Activated CD4-positive, alpha-beta memory T cell treated with anti-CD3 and anti-CD28 coated beads, Interleukin-2, amount 10 ng/mL, durations not matched to agents 7 days and 5 days (primary cell): ENCODE measurements at regions of chr2 and their contacts with region 1.

Region 1: DNA sequence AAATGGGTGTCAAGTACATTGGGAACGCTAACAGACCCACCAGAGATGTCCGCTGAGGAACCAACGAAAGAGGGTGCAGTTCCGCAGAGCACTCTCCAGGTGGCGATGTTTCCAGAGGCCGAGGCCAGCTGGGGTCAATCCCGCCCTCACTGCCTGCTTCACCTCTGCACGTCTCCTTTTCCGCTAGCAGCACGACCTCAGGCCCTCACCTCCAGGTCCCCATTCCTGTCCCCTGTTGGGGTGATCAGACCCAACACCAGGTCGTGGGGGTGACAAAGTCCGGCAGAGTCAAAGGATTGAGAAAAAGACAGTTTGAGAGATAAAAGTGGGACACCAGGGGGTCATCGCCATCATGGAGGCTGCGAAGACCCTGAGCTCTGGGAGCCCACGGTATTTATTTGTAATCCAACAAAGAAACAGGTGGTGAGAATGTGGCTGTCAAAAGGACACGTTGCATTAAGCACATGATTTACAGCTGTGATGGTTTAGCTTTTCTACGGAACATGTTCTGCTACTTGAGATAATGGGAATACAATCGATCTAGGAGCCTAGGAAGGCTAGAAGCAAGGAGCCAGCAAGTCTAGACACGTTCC is 27.3 kb downstream of the ZAP70 start:
- DNase-seq: peak; percentile 46
- H3K4me3 Mint-ChIP-seq: no peak overlapping the region
- H3K27ac Mint-ChIP-seq: peak overlapping the region; percentile 99
- H3K4me1 Mint-ChIP-seq: peaks cover 66% of the 10 kb centered on the region
- H3K27me3 Mint-ChIP-seq: no peaks in the 10 kb centered on the region

Region 2: GRCh38 chr2:97645695-97646629 is 94.7 kb before region 1 on chr2 and contains the start of gene COX5B:
- CTCF ChIA-PET with region 1: interaction called, 4 read pairs
- POLR2A ChIA-PET with region 1: interaction called, 12 read pairs
- DNase-seq: peak; percentile 99
- H3K4me3 Mint-ChIP-seq: peak within 1 kb of the TSS; percentile 91
- H3K27ac Mint-ChIP-seq: peak within 1 kb of the TSS; percentile 92
- H3K4me1 Mint-ChIP-seq: peaks cover 24% of the 10 kb centered on the region
- H3K27me3 Mint-ChIP-seq: peaks cover 3% of the 10 kb centered on the region
- total RNA-seq, gene COX5B: 192 to 203 TPM

Region 3: DNA sequence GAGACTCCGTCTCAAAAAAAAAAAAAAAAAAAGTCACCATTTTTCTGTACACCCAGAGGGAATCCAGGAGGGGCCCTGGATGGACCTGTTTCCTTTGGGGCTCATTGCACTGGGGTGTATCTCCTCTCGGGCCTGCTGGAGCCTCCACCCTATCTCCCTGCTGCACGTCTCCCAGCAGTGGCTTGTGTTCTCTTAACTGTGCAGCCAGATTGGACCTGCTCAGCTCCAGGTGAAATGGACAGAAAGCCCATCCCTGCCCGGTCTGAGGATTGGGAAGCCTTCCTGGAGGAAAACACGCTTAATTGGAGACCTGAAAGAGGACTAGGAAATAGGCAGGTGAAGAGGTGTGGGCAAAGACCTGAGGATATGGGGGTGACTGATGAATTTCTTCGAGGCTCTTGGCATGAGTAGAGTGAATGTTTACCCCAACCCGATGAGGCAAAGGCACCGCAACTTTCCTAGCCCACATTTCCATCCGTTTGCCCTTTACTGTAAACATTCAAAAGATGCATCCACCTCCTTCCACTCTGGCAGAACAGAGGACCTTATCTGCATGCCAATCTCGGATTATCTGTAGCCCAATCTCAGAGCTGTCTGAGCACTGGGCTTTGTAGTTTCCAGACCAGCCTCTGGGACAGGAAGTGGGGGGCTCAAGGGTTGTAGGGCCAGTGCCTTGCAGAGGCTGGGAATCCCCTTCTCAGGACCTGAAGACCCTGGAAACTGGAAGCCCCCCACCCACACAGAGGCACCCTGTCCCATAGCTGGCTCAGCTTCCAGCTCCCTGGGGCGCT is 29.9 kb before region 1 on chr2:
- CTCF ChIA-PET with region 1: interaction called, 96 read pairs
- POLR2A ChIA-PET with region 1: interaction called, 119 read pairs
- DNase-seq: no peak
- H3K4me3 Mint-ChIP-seq: no peak overlapping the region
- H3K27ac Mint-ChIP-seq: no peak overlapping the region
- H3K4me1 Mint-ChIP-seq: peaks cover 49% of the 10 kb centered on the region
- H3K27me3 Mint-ChIP-seq: no peaks in the 10 kb centered on the region

Region 4: DNA sequence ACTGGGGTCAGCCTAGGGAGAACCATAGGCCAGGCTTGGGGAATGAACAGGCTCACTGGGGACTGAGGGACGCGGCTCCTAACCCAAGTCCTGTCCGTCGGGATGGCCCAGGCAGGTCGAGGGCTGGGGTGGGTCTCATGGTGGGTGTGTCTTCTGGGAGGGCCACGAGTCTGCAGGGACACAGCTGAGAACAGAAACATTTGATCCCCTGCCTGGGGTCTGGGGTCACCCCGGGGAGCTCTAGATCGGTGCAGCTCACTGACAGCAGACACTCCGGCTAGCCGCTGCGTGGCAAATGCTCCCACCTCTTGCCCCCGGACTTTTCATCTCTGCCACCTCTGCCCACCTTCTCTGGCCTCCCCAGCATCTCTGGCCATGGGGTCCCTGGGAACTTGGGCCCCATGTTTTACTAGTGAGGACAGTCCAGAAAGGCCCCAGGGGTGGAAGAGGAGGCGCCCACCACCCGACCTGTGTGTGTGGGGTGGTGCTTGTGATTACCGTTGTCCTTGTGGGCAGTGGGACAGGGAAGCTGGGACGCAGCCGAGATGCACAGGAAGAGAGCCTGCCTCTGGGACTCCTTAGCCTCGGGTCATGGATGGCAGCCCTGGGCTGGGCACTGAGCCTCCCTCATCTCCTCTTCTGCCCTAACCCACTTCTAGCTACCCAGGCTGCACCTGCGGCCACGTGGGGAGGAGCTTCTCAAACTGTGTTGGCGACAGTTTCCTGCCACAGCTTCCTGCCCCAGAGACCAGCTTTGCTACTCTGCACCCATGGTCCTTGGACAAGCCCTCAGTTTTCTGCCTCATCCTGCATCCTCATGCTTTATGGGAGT is 22.4 kb before region 1 on chr2:
- CTCF ChIA-PET with region 1: interaction called, 96 read pairs
- POLR2A ChIA-PET with region 1: interaction called, 119 read pairs
- DNase-seq: peak; percentile 89
- H3K4me3 Mint-ChIP-seq: peak overlapping the region; percentile 95
- H3K27ac Mint-ChIP-seq: peak overlapping the region; percentile 98
- H3K4me1 Mint-ChIP-seq: peaks cover 76% of the 10 kb centered on the region
- H3K27me3 Mint-ChIP-seq: no peaks in the 10 kb centered on the region

Region 5: GRCh38 chr2:97728091-97728731 is 12.5 kb before region 1 on chr2:
- CTCF ChIA-PET with region 1: interaction called, 15 read pairs
- POLR2A ChIA-PET with region 1: interaction called, 9 read pairs
- DNase-seq: no peak
- H3K4me3 Mint-ChIP-seq: no peak overlapping the region
- H3K27ac Mint-ChIP-seq: peak overlapping the region; percentile 58
- H3K4me1 Mint-ChIP-seq: peaks cover 54% of the 10 kb centered on the region
- H3K27me3 Mint-ChIP-seq: no peaks in the 10 kb centered on the region

Region 6: DNA sequence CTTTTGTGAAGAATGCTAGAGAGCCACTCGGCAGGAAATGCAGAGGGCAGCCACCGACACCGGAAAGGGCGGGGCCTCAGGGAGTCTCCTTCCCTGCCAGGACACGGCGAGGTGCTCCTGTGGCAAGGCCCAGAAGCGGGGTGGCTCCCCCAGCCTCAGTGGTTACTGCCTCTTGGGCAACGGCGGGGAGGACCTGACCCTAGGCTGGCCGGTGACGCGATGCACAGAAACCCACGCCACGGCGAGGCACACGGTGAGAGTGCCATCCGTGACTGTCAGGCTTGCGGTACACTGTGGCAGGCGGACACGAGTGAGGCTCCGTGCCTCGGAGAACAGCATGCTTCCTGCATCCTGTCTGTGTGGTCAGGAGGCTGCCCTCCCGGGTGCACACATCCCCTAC is 20.5 kb after region 1 on chr2:
- CTCF ChIA-PET with region 1: interaction called, 10 read pairs
- POLR2A ChIA-PET with region 1: interaction called, 6 read pairs
- DNase-seq: peak; percentile 73
- H3K4me3 Mint-ChIP-seq: peak overlapping the region; percentile 8
- H3K27ac Mint-ChIP-seq: peak overlapping the region; percentile 80
- H3K4me1 Mint-ChIP-seq: peaks cover 45% of the 10 kb centered on the region
- H3K27me3 Mint-ChIP-seq: no peaks in the 10 kb centered on the region

Region 7: DNA sequence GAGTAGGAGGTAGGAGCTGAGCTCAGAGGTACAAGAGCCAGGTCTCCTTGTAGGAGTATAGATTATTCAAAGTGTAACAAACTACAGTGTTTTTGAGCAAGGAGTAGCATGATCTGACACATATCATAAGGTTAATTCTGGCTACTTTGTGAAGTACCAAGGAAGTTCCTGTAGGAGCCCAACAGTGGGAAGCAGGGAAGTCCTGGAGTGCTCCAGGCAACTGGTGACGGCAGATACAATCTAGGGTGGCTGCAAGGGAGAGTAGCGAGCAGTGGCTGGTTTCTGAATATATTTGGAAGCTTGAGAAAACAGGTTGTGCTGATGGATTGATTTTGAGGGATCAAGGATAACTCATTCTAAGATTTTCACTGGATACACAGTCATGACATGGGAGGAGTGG is 149.4 kb after region 1 on chr2:
- CTCF ChIA-PET with region 1: no interaction called
- POLR2A ChIA-PET with region 1: no interaction called
- DNase-seq: no peak
- H3K4me3 Mint-ChIP-seq: no peak overlapping the region
- H3K27ac Mint-ChIP-seq: no peak overlapping the region
- H3K4me1 Mint-ChIP-seq: no peaks in the 10 kb centered on the region
- H3K27me3 Mint-ChIP-seq: no peaks in the 10 kb centered on the region

Region 8: GRCh38 chr2:98376996-98377395 is 636.3 kb after region 1 on chr2:
- CTCF ChIA-PET with region 1: no interaction called
- POLR2A ChIA-PET with region 1: no interaction called
- DNase-seq: no peak
- H3K4me3 Mint-ChIP-seq: no peak overlapping the region
- H3K27ac Mint-ChIP-seq: no peak overlapping the region
- H3K4me1 Mint-ChIP-seq: no peaks in the 10 kb centered on the region
- H3K27me3 Mint-ChIP-seq: peaks cover 30% of the 10 kb centered on the region